T-cell (primary cell): ENCODE measurements at regions of chr18 and their contacts with region 1.

Region 1: DNA sequence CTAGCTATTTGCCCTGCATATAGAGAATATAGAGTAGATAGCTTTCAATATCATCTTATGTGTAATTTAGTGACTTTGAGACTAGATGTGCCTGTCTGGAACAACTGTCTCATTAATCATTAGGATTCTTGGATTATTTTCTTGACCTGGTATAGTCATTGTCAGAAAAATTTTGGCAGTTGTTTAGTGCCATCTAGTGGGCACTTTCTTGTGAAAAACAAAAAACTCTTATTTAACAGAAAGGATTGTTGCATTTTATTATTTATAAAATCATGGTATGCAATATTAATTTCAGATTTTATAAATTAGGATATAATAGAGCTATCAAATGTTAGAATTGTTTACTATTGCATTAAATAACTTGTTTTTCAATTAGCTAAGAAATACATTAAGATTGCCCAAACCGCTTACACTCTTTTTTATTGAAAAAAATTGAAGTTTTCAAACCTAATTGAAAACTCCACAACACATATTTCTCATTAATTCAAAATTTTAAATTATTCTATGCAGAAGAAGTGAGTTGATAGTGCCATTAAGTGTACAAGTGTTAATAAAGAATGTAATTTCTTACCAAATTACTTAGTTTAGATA is 80.3 kb downstream of the DYNAP start:
- DNase-seq: peak in 1 of 35 experiments; percentile 48
- ATAC-seq: no peak
- H3K4me3 ChIP-seq: no peak overlapping the region
- H3K4me3 Mint-ChIP-seq: no peak overlapping the region
- H3K27ac ChIP-seq: no peak overlapping the region
- H3K27ac Mint-ChIP-seq: no peak overlapping the region
- H3K4me1 ChIP-seq: no peaks in the 10 kb centered on the region
- H3K4me1 Mint-ChIP-seq: no peaks in the 10 kb centered on the region
- H3K27me3 ChIP-seq: peaks cover 0 to 4% of the 10 kb centered on the region in 2 experiments
- H3K27me3 Mint-ChIP-seq: peaks cover 9 to 11% of the 10 kb centered on the region in 2 donors

Region 2: DNA sequence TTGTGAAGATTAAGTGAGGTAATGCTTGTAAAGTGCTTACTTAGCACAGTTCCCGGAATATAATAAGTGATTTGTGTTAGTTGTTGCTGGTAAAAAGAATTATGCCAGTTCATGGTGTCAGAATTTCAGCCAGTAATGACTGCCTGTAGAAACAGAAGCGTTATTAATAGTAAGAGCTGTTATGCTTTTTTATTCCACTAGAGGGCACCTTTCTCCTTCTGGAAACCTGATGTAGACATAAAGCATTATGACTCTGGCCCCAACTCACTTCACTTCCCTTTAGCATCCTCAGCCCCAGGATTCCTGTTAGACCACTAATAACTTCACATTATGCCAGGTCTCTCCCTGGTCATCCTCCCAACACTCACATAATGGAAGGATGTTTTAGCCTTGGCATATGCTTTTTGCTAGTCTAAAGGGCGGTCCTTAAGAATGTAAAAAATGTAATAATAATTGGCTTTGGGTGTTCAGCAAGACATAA is 278.8 kb before region 1 on chr18:
- CTCF ChIA-PET with region 1: interaction called in 1 of 2 experiments, 13 read pairs
- POLR2A ChIA-PET with region 1: no interaction called
- DNase-seq: peak in 1 of 35 experiments; percentile 72
- ATAC-seq: peak in 3 of 4 experiments; percentile 43 to 56 (median 55)
- H3K4me3 ChIP-seq: no peak overlapping the region
- H3K4me3 Mint-ChIP-seq: no peak overlapping the region
- H3K27ac ChIP-seq: no peak overlapping the region
- H3K27ac Mint-ChIP-seq: no peak overlapping the region
- H3K4me1 ChIP-seq: no peaks in the 10 kb centered on the region
- H3K4me1 Mint-ChIP-seq: peaks cover 0 to 12% (median 6%) of the 10 kb centered on the region in 3 donors
- H3K27me3 ChIP-seq: peaks cover 0 to 2% of the 10 kb centered on the region in 2 experiments
- H3K27me3 Mint-ChIP-seq: peaks cover 2 to 12% of the 10 kb centered on the region in 2 donors

Region 3: GRCh38 chr18:54702686-54703085 is 31.3 kb after region 1 on chr18:
- CTCF ChIA-PET with region 1: no interaction called
- POLR2A ChIA-PET with region 1: no interaction called
- DNase-seq: no peak
- ATAC-seq: no peak
- H3K4me3 ChIP-seq: no peak overlapping the region
- H3K4me3 Mint-ChIP-seq: no peak overlapping the region
- H3K27ac ChIP-seq: no peak overlapping the region
- H3K27ac Mint-ChIP-seq: no peak overlapping the region
- H3K4me1 ChIP-seq: no peaks in the 10 kb centered on the region
- H3K4me1 Mint-ChIP-seq: no peaks in the 10 kb centered on the region
- H3K27me3 ChIP-seq: no peaks in the 10 kb centered on the region
- H3K27me3 Mint-ChIP-seq: peaks cover 1% of the 10 kb centered on the region in 2 donors